ENCODE measurements at regions of chr1 and their contacts with region 1.

Region 1: DNA sequence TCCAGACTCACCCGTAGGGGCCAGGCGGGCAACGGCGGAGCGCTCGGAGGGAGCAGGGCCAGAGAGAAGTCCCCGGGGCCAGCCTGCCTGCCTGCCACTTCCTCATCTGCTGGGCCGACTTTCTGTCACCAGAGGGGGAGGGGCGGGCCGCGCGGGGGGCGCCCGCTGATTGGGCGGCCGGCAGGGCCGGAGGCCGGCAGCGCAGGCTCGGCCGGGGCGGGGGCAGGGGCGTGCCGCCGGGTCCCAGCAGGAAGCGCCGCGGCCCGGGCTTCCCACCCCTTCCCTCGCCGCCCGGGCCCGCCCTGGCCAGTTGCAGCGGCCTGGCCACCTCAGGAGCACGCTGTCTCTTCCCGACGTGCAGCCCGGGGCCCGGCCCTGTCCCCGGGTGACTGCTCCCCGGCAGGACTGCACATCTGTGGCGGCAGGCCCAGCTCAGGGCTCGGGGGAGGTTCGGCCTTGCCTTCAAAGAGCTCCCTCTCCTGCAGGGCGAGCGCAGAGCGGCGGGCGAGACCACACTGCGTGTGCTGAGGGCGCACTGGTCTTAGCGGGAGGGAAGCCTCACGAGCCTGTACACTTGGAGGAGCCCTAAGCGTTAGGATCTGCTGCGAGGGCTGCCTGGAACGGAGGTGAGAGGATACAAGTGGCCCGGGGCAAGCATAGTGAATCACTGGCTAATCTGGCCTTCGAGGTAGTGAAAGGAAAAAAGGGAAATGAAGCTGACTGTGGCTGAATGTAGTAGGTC is at the start of gene ELOVL1:
- DNase-seq: peak; percentile 95
- ATAC-seq: peak; percentile 93
- total RNA-seq, gene ELOVL1: 72.4 TPM

Region 2: DNA sequence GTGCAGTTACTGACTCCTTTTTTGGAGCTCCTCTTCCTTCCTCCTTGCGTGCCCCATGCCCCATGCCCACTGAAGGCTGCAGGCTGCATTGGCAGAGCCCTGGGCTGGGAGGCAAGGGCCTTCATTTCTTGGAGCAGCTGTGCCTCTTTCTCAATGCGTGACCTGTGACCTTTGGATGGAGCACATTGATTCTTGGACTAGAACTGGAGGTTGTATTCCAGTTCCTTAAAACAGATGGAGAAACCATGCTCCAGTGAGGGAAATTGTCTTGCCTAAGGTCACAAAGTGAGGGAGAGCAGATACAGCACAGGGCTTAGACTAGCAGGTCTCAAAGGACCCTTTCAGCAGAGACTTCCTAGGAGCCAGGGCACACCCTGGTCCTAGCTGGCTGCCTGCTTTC is 574.3 kb before region 1 on chr1:
- intact Hi-C with region 1: loop called (anchors 5 kb)
- DNase-seq: no peak
- ATAC-seq: peak; percentile 89

Region 3: GRCh38 chr1:43008115-43009060 is 359.7 kb before region 1 on chr1:
- intact Hi-C with region 1: no loop called
- DNase-seq: peak; percentile 73
- ATAC-seq: peak; percentile 92

Region 4: GRCh38 chr1:45116340-45116739 is 1748.3 kb after region 1 on chr1:
- intact Hi-C with region 1: no loop called
- DNase-seq: no peak
- ATAC-seq: no peak

Measured in sciatic nerve (tissue), 2 donors.